CD4-positive, alpha-beta memory T cell (primary cell): ENCODE measurements at regions of chr17 and their contacts with region 1.

Region 1: DNA sequence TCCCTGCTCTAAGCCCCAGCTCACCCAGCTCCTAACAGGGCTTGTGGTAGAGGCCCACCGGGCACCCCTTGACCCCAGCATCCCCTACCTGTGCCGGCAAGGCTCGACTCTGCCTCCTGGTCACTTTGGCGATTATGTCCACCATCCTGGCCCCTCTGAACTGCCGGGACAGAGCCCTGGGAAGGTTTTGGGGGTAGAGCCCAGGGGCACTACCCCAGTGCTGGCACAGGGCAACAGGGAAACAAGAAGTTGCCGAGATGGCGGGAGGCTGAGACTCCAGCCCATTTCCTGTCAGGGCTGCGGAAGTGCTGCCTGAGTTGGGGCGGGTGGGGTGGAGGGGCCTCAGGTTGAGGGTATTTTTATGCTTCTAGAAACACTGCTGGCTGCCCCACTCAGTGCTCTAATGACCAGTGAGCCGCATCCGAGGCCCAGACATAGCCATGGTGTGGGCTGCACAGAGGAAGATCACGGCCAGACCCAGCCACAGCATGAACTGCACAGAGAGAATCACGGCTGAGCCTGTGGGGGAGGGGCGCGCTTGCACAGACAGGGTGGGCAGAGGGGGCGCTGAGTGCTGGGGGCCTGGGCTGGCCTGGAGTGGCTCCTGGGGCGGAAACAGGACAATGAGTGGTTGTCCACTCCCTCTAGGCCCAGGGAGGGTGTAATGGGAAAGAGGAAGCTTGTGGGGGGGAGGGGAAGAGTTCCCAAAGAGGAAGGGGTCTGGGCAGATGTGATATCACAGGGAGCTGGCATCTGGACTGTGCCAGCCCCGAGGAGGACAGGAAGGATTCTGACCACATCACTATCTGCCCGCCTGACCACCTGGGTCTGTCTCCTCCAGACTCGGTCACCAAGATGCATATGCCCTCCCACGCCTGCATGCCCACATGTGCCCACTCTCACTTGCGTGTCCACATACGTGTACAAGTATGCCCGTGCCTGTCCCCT is 22.3 kb downstream of the ARHGAP27 start:
- DNase-seq: peak; percentile 51 to 69 (median 60)
- H3K4me3 ChIP-seq: peak overlapping the region; percentile 97 to 98
- H3K4me3 Mint-ChIP-seq: peak overlapping the region; percentile 99 to 100 (median 99)
- H3K27ac ChIP-seq: peak overlapping the region; percentile 91
- H3K27ac Mint-ChIP-seq: peak overlapping the region; percentile 94 to 100 (median 99)
- H3K4me1 ChIP-seq: peaks cover 52% of the 10 kb centered on the region
- H3K4me1 Mint-ChIP-seq: peaks cover 36 to 63% (median 42%) of the 10 kb centered on the region in 4 donors
- H3K27me3 ChIP-seq: no peaks in the 10 kb centered on the region
- H3K27me3 Mint-ChIP-seq: no peaks in the 10 kb centered on the region

Region 2: GRCh38 chr17:45270828-45271418 is 139.5 kb before region 1 on chr17:
- CTCF ChIA-PET with region 1: no interaction called
- POLR2A ChIA-PET with region 1: no interaction called
- intact Hi-C with region 1: no loop called
- DNase-seq: peak; percentile 38 to 60 (median 41)
- H3K4me3 ChIP-seq: no peak overlapping the region
- H3K4me3 Mint-ChIP-seq: no peak overlapping the region
- H3K27ac ChIP-seq: no peak overlapping the region
- H3K27ac Mint-ChIP-seq: peak overlapping the region in 4 of 7 donors; percentile 22 to 31 (median 26)
- H3K4me1 ChIP-seq: no peaks in the 10 kb centered on the region
- H3K4me1 Mint-ChIP-seq: no peaks in the 10 kb centered on the region
- H3K27me3 ChIP-seq: no peaks in the 10 kb centered on the region
- H3K27me3 Mint-ChIP-seq: no peaks in the 10 kb centered on the region

Region 3: GRCh38 chr17:45364531-45365390 is 45.7 kb before region 1 on chr17:
- CTCF ChIA-PET with region 1: no interaction called
- POLR2A ChIA-PET with region 1: no interaction called
- intact Hi-C with region 1: no loop called
- DNase-seq: no peak
- H3K4me3 ChIP-seq: no peak overlapping the region
- H3K4me3 Mint-ChIP-seq: no peak overlapping the region
- H3K27ac ChIP-seq: no peak overlapping the region
- H3K27ac Mint-ChIP-seq: peak overlapping the region in 1 of 7 donors; percentile 53
- H3K4me1 ChIP-seq: no peaks in the 10 kb centered on the region
- H3K4me1 Mint-ChIP-seq: peaks cover 0 to 2% (median 0%) of the 10 kb centered on the region in 4 donors
- H3K27me3 ChIP-seq: no peaks in the 10 kb centered on the region
- H3K27me3 Mint-ChIP-seq: peaks cover 12 to 14% of the 10 kb centered on the region in 2 donors

Region 4: GRCh38 chr17:45428050-45428617 is 17.7 kb after region 1 on chr17:
- CTCF ChIA-PET with region 1: interaction called, 10 read pairs
- POLR2A ChIA-PET with region 1: interaction called, 5 read pairs
- intact Hi-C with region 1: loop called (anchors 2 kb)
- DNase-seq: peak; percentile 60 to 84 (median 77)
- H3K4me3 ChIP-seq: no peak overlapping the region
- H3K4me3 Mint-ChIP-seq: peak overlapping the region; percentile 37 to 86 (median 68)
- H3K27ac ChIP-seq: no peak overlapping the region
- H3K27ac Mint-ChIP-seq: peak overlapping the region; percentile 17 to 91 (median 76)
- H3K4me1 ChIP-seq: peaks cover 19% of the 10 kb centered on the region
- H3K4me1 Mint-ChIP-seq: peaks cover 9 to 29% (median 23%) of the 10 kb centered on the region in 4 donors
- H3K27me3 ChIP-seq: no peaks in the 10 kb centered on the region
- H3K27me3 Mint-ChIP-seq: no peaks in the 10 kb centered on the region

Region 5: GRCh38 chr17:45660474-45660873 is 250.1 kb after region 1 on chr17:
- CTCF ChIA-PET with region 1: no interaction called
- POLR2A ChIA-PET with region 1: no interaction called
- intact Hi-C with region 1: no loop called
- DNase-seq: no peak
- H3K4me3 ChIP-seq: no peak overlapping the region
- H3K4me3 Mint-ChIP-seq: no peak overlapping the region
- H3K27ac ChIP-seq: no peak overlapping the region
- H3K27ac Mint-ChIP-seq: peak overlapping the region in 1 of 7 donors; percentile 8
- H3K4me1 ChIP-seq: no peaks in the 10 kb centered on the region
- H3K4me1 Mint-ChIP-seq: no peaks in the 10 kb centered on the region
- H3K27me3 ChIP-seq: peaks cover 6% of the 10 kb centered on the region
- H3K27me3 Mint-ChIP-seq: peaks cover 18 to 36% of the 10 kb centered on the region in 2 donors